ENCODE measurements at regions of chr6 and their contacts with region 1.

Region 1: GRCh38 chr6:38493931-38494547 is 145.7 kb downstream of the BTBD9 start:
- H3K4me3 Mint-ChIP-seq: no peak overlapping the region
- H3K27ac Mint-ChIP-seq: no peak overlapping the region
- H3K4me1 Mint-ChIP-seq: no peaks in the 10 kb centered on the region
- H3K27me3 Mint-ChIP-seq: no peaks in the 10 kb centered on the region

Region 2: DNA sequence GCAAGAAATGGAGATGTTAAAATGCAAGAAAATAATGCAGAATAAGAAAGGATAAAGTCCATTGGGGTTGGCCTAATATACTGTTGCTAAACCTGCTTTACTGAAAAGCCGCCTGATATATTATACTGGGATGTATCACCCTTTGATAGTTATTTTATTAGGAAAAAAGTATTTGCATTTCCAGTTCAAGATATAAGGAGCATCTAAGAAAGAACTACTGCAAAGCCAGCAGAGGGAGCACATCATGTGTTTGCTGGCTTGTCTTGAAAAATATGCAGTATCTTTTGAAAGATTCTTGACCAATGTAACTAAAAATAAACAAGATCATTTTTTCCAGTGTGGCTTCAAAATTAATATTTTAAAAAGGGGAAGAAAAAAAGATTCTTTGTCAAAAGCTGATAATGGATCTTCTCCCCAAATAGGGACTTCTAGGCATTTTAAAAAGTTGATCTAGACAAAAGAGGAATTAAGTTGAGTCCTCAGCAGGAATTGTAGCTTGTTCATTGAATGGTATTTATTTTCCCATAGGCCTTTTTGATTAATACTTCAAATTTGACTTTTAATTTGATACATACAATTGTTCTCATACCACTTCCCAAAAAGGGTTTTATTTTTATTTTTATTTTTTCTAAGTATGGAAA is 459.6 kb before region 1 on chr6:
- intact Hi-C with region 1: loop called (anchors 5 kb)
- H3K4me3 Mint-ChIP-seq: no peak overlapping the region
- H3K27ac Mint-ChIP-seq: no peak overlapping the region
- H3K4me1 Mint-ChIP-seq: peaks cover 22% of the 10 kb centered on the region
- H3K27me3 Mint-ChIP-seq: no peaks in the 10 kb centered on the region